ENCODE measurements at regions of chr20 and their contacts with region 1.

Region 1: DNA sequence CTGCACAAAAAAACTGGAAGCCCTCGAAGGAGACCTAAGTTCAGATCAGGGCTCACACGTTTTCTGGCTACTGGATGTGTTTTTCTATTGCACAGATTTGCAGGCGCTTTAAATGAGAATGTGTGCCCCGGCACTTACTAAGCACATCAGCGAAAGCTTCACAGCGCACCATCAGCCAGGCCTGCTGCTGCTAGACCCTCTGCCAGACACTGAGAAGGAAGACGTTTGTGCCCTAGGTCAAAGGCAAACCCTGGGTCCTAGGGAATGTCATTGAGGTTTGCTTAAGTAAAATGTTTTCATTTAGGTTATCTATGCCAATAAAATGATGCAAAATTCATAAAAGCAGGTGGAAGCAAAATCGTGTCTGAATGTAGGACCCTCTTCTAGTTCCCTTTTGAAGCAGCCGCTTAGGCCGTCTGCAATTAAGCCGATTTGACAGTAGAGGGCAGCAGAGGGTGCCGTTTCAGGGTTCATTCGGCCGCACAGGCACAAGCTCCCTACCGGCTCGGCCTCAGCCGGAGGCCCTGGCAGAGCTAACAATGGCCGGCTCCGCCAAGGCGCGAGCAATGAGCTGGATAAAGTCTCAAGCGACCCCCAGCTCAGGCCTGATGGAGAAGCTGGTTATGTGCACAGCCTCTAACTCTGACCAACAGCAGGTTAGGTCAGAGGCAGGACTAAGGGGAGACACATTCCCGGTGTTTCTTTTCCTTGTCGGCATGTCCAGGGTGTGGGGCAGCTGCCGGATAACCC is 107.2 kb upstream of the FOXA2 start:
- DNase-seq: peak; percentile 63
- H3K4me3 Mint-ChIP-seq: no peak overlapping the region
- H3K27ac Mint-ChIP-seq: no peak overlapping the region
- H3K4me1 Mint-ChIP-seq: no peaks in the 10 kb centered on the region
- H3K27me3 Mint-ChIP-seq: no peaks in the 10 kb centered on the region

Region 2: GRCh38 chr20:22805219-22805618 is 113.7 kb after region 1 on chr20:
- CTCF ChIA-PET with region 1: no interaction called
- DNase-seq: no peak
- H3K4me3 Mint-ChIP-seq: no peak overlapping the region
- H3K27ac Mint-ChIP-seq: no peak overlapping the region
- H3K4me1 Mint-ChIP-seq: no peaks in the 10 kb centered on the region
- H3K27me3 Mint-ChIP-seq: no peaks in the 10 kb centered on the region

Region 3: GRCh38 chr20:22974353-22974752 is 282.8 kb after region 1 on chr20:
- CTCF ChIA-PET with region 1: interaction called, 12 read pairs
- DNase-seq: no peak
- H3K4me3 Mint-ChIP-seq: no peak overlapping the region
- H3K27ac Mint-ChIP-seq: no peak overlapping the region
- H3K4me1 Mint-ChIP-seq: no peaks in the 10 kb centered on the region
- H3K27me3 Mint-ChIP-seq: no peaks in the 10 kb centered on the region

Region 4: DNA sequence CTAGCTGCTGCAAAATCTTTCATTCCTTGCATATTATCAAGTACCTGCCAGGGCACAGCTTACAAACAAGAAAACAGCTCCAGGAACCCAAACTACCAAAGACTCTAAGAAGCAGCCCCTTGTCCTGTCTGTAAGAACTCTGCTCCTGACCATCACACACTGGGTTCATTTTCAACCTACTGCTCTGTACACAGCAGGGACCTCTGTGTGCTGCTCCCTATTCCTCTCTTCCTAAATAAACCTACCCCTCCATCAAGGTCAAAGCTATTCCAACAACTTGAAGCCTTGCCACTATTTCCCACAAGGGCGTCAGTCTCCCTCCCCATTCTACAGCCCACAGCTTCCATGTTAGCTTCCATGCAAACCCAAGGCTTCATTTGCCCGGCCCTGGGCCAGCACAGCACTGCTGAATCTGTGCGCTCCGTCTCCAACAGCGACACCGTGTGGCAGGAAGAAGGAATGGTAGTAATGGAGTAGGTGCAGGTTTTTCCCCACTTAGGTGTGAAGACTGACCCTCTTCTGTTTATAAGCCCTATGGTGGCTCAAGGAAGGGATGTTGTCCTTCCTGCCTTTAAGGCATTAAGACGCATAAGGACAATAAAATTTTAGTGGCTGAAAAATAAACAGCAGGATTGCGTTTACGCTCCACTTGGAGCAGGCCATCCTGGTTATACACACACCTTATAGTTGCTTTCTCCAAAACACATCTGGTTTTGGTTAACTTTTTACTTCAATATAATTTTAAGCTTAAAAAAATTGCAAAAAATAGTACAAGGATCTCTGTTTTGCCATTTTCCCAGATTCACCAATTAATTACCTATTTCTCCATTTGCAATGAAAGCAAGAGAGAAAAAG is 543.9 kb after region 1 on chr20:
- CTCF ChIA-PET with region 1: interaction called, 28 read pairs
- DNase-seq: peak; percentile 50
- H3K4me3 Mint-ChIP-seq: no peak overlapping the region
- H3K27ac Mint-ChIP-seq: no peak overlapping the region
- H3K4me1 Mint-ChIP-seq: no peaks in the 10 kb centered on the region
- H3K27me3 Mint-ChIP-seq: peaks cover 9% of the 10 kb centered on the region

Region 5: DNA sequence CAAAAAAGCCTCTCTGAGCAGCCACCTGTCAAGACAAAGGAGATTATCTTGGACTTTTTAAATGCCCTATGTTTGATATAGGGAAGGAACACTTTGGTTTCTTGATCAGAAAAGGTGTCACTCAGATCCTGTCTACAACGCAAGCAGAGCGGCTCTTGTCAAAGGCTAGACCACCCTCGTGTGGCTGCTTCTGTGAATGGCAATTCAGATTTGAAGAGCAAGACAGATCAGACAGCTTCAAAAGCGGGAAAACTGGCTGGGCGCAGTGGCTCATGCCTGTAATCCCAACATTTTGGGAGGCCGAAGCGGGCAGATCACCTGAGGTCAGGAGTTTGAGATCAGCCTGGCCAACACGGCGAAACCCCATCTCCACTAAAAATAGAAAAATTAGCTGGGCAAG is 649.0 kb after region 1 on chr20:
- CTCF ChIA-PET with region 1: interaction called, 19 read pairs
- DNase-seq: peak; percentile 57
- H3K4me3 Mint-ChIP-seq: no peak overlapping the region
- H3K27ac Mint-ChIP-seq: no peak overlapping the region
- H3K4me1 Mint-ChIP-seq: peaks cover 6% of the 10 kb centered on the region
- H3K27me3 Mint-ChIP-seq: peaks cover 11% of the 10 kb centered on the region